ENCODE measurements at regions of chr22 and their contacts with region 1.

Region 1: GRCh38 chr22:38872172-38872830 is at the start of gene CBX6:
- DNase-seq: peak; percentile 96
- H3K4me3 ChIP-seq: peak within 1 kb of the TSS; percentile 86
- H3K27ac ChIP-seq: peak within 1 kb of the TSS; percentile 93
- H3K4me1 ChIP-seq: peaks cover 35% of the 10 kb centered on the region
- H3K27me3 ChIP-seq: no peaks in the 10 kb centered on the region
- CTCF ChIP-seq: no peak
- total RNA-seq, gene CBX6: 111 and 119 TPM in 2 replicates

Region 2: DNA sequence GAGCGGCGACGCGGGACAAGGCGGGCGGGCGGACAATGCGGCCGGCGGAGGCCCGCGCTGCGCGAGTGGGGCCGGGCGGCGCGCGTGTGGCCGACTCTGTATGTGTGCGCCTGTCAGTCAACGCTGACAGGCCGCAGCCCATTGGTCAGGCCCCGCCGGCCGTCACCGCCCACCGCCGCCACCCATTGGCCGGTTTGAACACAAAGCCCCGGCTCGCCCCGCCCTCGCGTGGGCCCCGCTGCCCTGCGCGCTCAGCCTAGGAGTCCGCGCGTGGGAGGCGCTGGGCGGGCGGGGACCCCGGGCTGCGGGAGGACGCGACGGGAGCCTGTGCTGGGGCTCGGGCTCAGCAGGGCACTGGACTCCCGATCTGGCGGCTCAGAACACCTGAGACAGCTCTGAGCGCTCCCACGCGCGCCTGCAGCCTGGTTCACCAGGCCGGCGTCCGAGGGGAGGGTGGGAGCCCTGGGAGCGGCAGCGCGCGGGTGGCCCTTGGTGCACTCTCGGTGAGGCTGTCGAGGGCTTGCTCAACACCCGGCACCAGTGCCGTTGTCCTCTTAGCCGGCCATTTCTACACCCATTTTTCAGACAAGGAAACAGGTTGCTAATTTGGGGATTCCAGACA is 116.3 kb before region 1 on chr22 and contains the start of gene SUN2:
- CTCF ChIA-PET with region 1: no interaction called
- POLR2A ChIA-PET with region 1: no interaction called
- intact Hi-C with region 1: no loop called
- DNase-seq: peak; percentile 91
- H3K4me3 ChIP-seq: peak within 1 kb of the TSS; percentile 97
- H3K27ac ChIP-seq: peak within 1 kb of the TSS; percentile 93
- H3K4me1 ChIP-seq: peaks cover 44% of the 10 kb centered on the region
- H3K27me3 ChIP-seq: no peaks in the 10 kb centered on the region
- CTCF ChIP-seq: no peak
- total RNA-seq, gene SUN2: 104 and 110 TPM in 2 replicates

Region 3: GRCh38 chr22:38972558-38972957 is 100.3 kb after region 1 on chr22:
- CTCF ChIA-PET with region 1: interaction called, 10 read pairs
- POLR2A ChIA-PET with region 1: no interaction called
- intact Hi-C with region 1: no loop called
- DNase-seq: no peak
- H3K4me3 ChIP-seq: no peak overlapping the region
- H3K27ac ChIP-seq: no peak overlapping the region
- H3K4me1 ChIP-seq: no peaks in the 10 kb centered on the region
- H3K27me3 ChIP-seq: no peaks in the 10 kb centered on the region
- CTCF ChIP-seq: no peak

Region 4: DNA sequence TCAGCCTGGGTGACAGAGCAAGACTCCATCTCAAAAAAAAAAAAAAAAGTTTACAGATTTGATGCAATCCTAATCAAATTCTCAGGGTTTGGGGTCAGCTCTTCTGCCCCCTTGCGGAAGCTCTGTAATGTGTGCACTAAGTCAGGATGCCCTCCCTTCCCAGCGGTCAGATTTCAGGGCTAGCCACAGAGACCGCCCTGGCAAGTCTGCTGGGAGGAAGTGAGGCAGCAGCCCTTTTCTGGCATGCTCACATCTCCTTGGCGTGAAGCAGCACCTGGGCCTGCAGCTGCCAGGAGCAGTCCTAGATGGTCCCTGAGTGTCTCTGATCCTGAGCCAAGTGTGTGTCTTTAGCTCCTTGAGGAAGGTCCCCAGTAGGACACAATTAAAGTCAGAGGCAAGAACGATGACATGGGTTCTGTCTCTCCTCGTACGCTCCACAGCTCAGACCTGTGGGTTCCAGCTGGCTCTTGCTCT is 130.9 kb after region 1 on chr22:
- CTCF ChIA-PET with region 1: interaction called, 14 read pairs
- POLR2A ChIA-PET with region 1: no interaction called
- intact Hi-C with region 1: loop called (anchors 2 kb)
- DNase-seq: peak; percentile 78
- H3K4me3 ChIP-seq: no peak overlapping the region
- H3K27ac ChIP-seq: no peak overlapping the region
- H3K4me1 ChIP-seq: peaks cover 7% of the 10 kb centered on the region
- H3K27me3 ChIP-seq: no peaks in the 10 kb centered on the region
- CTCF ChIP-seq: peak; percentile 74

Region 5: GRCh38 chr22:39117585-39118191 is 245.4 kb after region 1 on chr22:
- CTCF ChIA-PET with region 1: interaction called, 3 read pairs
- POLR2A ChIA-PET with region 1: no interaction called
- intact Hi-C with region 1: loop called (anchors 5 kb)
- DNase-seq: peak; percentile 64
- H3K4me3 ChIP-seq: no peak overlapping the region
- H3K27ac ChIP-seq: no peak overlapping the region
- H3K4me1 ChIP-seq: peaks cover 3% of the 10 kb centered on the region
- H3K27me3 ChIP-seq: no peaks in the 10 kb centered on the region
- CTCF ChIP-seq: peak; percentile 69

Region 6: GRCh38 chr22:39266398-39267030 is 394.2 kb after region 1 on chr22:
- CTCF ChIA-PET with region 1: no interaction called
- POLR2A ChIA-PET with region 1: no interaction called
- intact Hi-C with region 1: no loop called
- DNase-seq: no peak
- H3K4me3 ChIP-seq: no peak overlapping the region
- H3K27ac ChIP-seq: no peak overlapping the region
- H3K4me1 ChIP-seq: no peaks in the 10 kb centered on the region
- H3K27me3 ChIP-seq: no peaks in the 10 kb centered on the region
- CTCF ChIP-seq: no peak

Region 7: DNA sequence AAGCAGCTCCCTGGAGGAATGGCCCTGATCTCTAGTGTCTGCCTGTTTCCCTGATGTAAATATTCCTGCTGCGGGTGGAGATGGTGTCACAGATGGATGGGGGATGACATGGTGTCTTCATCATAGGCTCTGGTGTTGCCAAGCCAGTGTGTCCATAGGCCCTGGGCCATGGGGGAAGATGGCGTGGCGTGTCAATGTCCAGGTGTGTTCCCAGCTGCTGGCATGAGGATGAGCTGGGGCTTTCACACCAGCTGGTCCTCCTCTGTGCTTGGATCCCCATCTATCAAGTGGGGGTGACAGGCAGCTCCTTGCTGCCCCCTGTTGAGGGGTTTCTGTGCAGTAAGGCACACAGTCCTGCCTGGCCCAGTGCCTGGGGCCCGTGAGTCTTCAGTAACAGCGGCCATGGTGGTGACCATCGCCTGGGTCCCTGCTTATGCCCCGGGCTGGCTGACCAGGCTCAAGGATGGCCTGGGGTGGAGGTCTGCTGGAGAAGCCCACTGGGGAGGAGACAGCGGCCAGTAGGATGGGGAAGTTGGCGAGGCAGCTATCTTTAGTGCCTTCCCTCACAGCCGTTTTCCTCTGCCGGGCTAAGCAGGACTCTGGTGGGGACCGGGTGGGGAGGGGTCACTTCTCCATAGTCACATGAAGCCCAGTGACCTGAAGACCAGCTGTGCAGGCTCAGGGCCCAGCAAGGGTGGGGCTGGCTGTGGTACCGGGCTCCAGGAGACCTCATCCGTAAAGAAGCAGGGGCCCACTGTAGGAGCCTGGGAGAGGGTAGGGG is 434.5 kb after region 1 on chr22:
- CTCF ChIA-PET with region 1: no interaction called
- POLR2A ChIA-PET with region 1: no interaction called
- intact Hi-C with region 1: loop called (anchors 10 kb)
- DNase-seq: peak; percentile 62
- H3K4me3 ChIP-seq: no peak overlapping the region
- H3K27ac ChIP-seq: no peak overlapping the region
- H3K4me1 ChIP-seq: peaks cover 18% of the 10 kb centered on the region
- H3K27me3 ChIP-seq: no peaks in the 10 kb centered on the region
- CTCF ChIP-seq: peak; percentile 70

Region 8: GRCh38 chr22:39490135-39490798 is 618.0 kb after region 1 on chr22:
- CTCF ChIA-PET with region 1: no interaction called
- POLR2A ChIA-PET with region 1: no interaction called
- intact Hi-C with region 1: no loop called
- DNase-seq: peak; percentile 91
- H3K4me3 ChIP-seq: no peak overlapping the region
- H3K27ac ChIP-seq: no peak overlapping the region
- H3K4me1 ChIP-seq: no peaks in the 10 kb centered on the region
- H3K27me3 ChIP-seq: no peaks in the 10 kb centered on the region
- CTCF ChIP-seq: no peak

Measured in A673 (cell line).